Activated CD4-positive, alpha-beta memory T cell treated with anti-CD3 and anti-CD28 coated beads, Interleukin-2, amount 10 ng/mL, durations not matched to agents 7 days and 5 days (primary cell): ENCODE measurements at regions of chr2 and their contacts with region 1.

Region 1: GRCh38 chr2:8514796-8515758 is 166.8 kb upstream of the ID2 start:
- DNase-seq: peak; percentile 77
- H3K4me3 Mint-ChIP-seq: peak overlapping the region; percentile 41
- H3K27ac Mint-ChIP-seq: peak overlapping the region; percentile 89
- H3K4me1 Mint-ChIP-seq: peaks cover 73% of the 10 kb centered on the region
- H3K27me3 Mint-ChIP-seq: no peaks in the 10 kb centered on the region

Region 2: GRCh38 chr2:8472545-8473323 is 42.3 kb before region 1 on chr2:
- CTCF ChIA-PET with region 1: interaction called, 3 read pairs
- POLR2A ChIA-PET with region 1: interaction called, 12 read pairs
- DNase-seq: peak; percentile 57
- H3K4me3 Mint-ChIP-seq: peak overlapping the region; percentile 11
- H3K27ac Mint-ChIP-seq: peak overlapping the region; percentile 92
- H3K4me1 Mint-ChIP-seq: peaks cover 84% of the 10 kb centered on the region
- H3K27me3 Mint-ChIP-seq: no peaks in the 10 kb centered on the region

Region 3: GRCh38 chr2:8477552-8478470 is 37.3 kb before region 1 on chr2:
- CTCF ChIA-PET with region 1: interaction called, 3 read pairs
- POLR2A ChIA-PET with region 1: interaction called, 12 read pairs
- DNase-seq: peak; percentile 56
- H3K4me3 Mint-ChIP-seq: peak overlapping the region; percentile 58
- H3K27ac Mint-ChIP-seq: peak overlapping the region; percentile 96
- H3K4me1 Mint-ChIP-seq: peaks cover 93% of the 10 kb centered on the region
- H3K27me3 Mint-ChIP-seq: no peaks in the 10 kb centered on the region

Region 4: DNA sequence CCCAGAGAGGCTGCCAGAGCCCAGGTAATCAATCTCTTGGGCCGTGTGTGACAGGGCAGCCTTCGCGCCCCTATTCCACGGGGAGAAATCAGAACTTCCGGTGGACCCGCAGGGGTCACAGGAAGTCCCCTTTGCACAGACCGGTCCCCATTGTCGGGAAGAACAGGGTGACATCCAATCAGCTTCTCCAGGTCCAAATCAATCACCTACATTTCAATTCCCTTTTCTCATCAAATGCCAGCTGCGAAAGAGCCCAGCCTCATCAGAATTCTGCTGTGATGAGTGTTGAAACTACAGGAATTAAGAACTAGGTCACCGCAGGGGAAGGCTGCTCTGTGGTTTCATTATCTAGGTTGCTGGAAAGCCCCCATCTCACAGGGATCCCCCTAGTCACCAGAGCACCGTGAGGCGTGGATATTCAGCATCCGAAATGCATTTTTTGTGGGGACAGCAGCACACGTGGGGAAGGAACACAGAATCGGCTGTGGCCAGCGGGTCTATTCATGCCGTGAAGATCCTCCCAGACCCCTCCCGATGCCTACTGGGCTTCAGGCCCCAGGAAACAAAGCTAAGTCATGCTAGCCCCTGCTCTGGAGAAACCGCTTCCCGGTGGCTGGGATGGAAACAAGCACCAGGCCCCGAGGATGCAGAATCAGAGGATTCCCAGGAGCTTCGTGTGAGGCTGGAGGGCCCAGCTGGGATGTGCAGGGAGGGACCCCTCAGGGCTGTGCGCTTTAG is 26.9 kb before region 1 on chr2:
- CTCF ChIA-PET with region 1: interaction called, 4 read pairs
- POLR2A ChIA-PET with region 1: interaction called, 44 read pairs
- DNase-seq: peak; percentile 70
- H3K4me3 Mint-ChIP-seq: peak overlapping the region; percentile 81
- H3K27ac Mint-ChIP-seq: peak overlapping the region; percentile 84
- H3K4me1 Mint-ChIP-seq: peaks cover 78% of the 10 kb centered on the region
- H3K27me3 Mint-ChIP-seq: no peaks in the 10 kb centered on the region

Region 5: GRCh38 chr2:8525582-8526402 is 10.7 kb after region 1 on chr2:
- CTCF ChIA-PET with region 1: interaction called, 3 read pairs
- POLR2A ChIA-PET with region 1: interaction called, 22 read pairs
- DNase-seq: no peak
- H3K4me3 Mint-ChIP-seq: no peak overlapping the region
- H3K27ac Mint-ChIP-seq: no peak overlapping the region
- H3K4me1 Mint-ChIP-seq: peaks cover 58% of the 10 kb centered on the region
- H3K27me3 Mint-ChIP-seq: peaks cover 3% of the 10 kb centered on the region